ENCODE measurements at regions of chr6 and their contacts with region 1.

Region 1: GRCh38 chr6:154139892-154140291 is 100.9 kb downstream of the OPRM1 start:
- DNase-seq: peak; percentile 91 to 94 (median 92)
- H3K4me3 ChIP-seq: peak overlapping the region in 1 of 3 experiments; percentile 45
- H3K4me3 Mint-ChIP-seq: peak overlapping the region; percentile 31 to 66
- H3K27ac ChIP-seq: peak overlapping the region; percentile 67 to 95
- H3K27ac Mint-ChIP-seq: peak overlapping the region; percentile 82 to 96 (median 89)
- H3K4me1 ChIP-seq: peaks cover 26 to 29% of the 10 kb centered on the region in 2 donors
- H3K4me1 Mint-ChIP-seq: peaks cover 26% of the 10 kb centered on the region
- H3K27me3 ChIP-seq: no peaks in the 10 kb centered on the region
- H3K27me3 Mint-ChIP-seq: peaks cover 0 to 2% (median 0%) of the 10 kb centered on the region in 3 donors
- CTCF ChIP-seq: no peak

Region 2: DNA sequence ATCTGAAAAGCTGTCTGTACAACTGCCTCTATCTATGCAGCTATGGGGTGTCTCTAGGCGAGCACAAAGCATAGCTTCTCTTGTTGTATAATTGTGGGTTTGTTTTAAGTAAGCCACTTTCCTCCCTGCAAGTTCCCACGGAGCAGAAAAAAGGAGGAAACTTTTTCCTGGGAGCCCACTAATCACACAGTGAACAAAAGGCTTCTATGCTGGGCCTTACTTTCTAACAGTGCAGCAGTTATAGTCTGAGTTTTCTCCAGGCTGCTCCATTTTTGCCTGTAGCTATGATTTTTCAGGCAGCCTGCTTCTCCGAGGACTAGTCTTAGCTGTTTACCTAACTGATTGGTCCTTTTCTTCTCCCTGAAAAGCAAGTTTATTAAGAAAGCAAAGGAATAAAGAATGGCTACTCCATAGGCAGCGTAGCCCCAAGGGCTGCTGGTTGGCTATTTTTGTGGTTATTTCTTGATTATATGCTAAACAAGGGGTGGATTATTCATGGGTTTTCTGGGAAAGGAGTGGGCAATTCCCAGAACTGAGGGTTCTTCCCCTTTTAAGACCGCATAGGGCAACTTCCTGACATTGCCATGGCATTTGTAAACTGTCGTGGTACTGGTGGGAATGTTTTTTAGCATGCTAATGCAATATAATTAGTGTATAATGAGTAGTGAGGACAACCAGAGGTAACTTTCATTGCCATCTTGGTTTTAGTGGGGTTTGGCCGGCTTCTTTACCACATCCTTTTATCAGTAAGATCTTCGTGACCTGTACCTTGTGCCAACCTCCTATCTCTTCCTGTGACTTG is 16.5 kb before region 1 on chr6:
- intact Hi-C with region 1: no loop called
- DNase-seq: peak in 1 of 3 donors; percentile 52
- H3K4me3 ChIP-seq: no peak overlapping the region
- H3K4me3 Mint-ChIP-seq: no peak overlapping the region
- H3K27ac ChIP-seq: no peak overlapping the region
- H3K27ac Mint-ChIP-seq: no peak overlapping the region
- H3K4me1 ChIP-seq: peaks cover 14 to 34% of the 10 kb centered on the region in 2 donors
- H3K4me1 Mint-ChIP-seq: peaks cover 35% of the 10 kb centered on the region
- H3K27me3 ChIP-seq: no peaks in the 10 kb centered on the region
- H3K27me3 Mint-ChIP-seq: peaks cover 0 to 4% (median 0%) of the 10 kb centered on the region in 3 donors
- CTCF ChIP-seq: no peak

Region 3: GRCh38 chr6:154301839-154302752 is 162.2 kb after region 1 on chr6:
- intact Hi-C with region 1: loop called in 1 of 2 experiments (anchors 5 kb)
- DNase-seq: peak; percentile 83 to 95 (median 91)
- H3K4me3 ChIP-seq: peak overlapping the region in 1 of 3 experiments; percentile 35
- H3K4me3 Mint-ChIP-seq: peak overlapping the region; percentile 6 to 42
- H3K27ac ChIP-seq: peak overlapping the region in 1 of 2 donors; percentile 72
- H3K27ac Mint-ChIP-seq: peak overlapping the region; percentile 74 to 89 (median 81)
- H3K4me1 ChIP-seq: peaks cover 65 to 72% of the 10 kb centered on the region in 2 donors
- H3K4me1 Mint-ChIP-seq: peaks cover 77% of the 10 kb centered on the region
- H3K27me3 ChIP-seq: no peaks in the 10 kb centered on the region
- H3K27me3 Mint-ChIP-seq: no peaks in the 10 kb centered on the region
- CTCF ChIP-seq: no peak

Region 4: GRCh38 chr6:154352898-154353585 is 213.2 kb after region 1 on chr6:
- intact Hi-C with region 1: loop called in 1 of 2 experiments (anchors 10 kb)
- DNase-seq: peak; percentile 52 to 82 (median 68)
- H3K4me3 ChIP-seq: peak overlapping the region in 1 of 3 experiments; percentile 76
- H3K4me3 Mint-ChIP-seq: peak overlapping the region; percentile 50 to 73
- H3K27ac ChIP-seq: peak overlapping the region; percentile 73 to 83
- H3K27ac Mint-ChIP-seq: peak overlapping the region; percentile 80 to 98 (median 92)
- H3K4me1 ChIP-seq: peaks cover 62 to 71% of the 10 kb centered on the region in 2 donors
- H3K4me1 Mint-ChIP-seq: peaks cover 69% of the 10 kb centered on the region
- H3K27me3 ChIP-seq: no peaks in the 10 kb centered on the region
- H3K27me3 Mint-ChIP-seq: no peaks in the 10 kb centered on the region
- CTCF ChIP-seq: no peak

Region 5: DNA sequence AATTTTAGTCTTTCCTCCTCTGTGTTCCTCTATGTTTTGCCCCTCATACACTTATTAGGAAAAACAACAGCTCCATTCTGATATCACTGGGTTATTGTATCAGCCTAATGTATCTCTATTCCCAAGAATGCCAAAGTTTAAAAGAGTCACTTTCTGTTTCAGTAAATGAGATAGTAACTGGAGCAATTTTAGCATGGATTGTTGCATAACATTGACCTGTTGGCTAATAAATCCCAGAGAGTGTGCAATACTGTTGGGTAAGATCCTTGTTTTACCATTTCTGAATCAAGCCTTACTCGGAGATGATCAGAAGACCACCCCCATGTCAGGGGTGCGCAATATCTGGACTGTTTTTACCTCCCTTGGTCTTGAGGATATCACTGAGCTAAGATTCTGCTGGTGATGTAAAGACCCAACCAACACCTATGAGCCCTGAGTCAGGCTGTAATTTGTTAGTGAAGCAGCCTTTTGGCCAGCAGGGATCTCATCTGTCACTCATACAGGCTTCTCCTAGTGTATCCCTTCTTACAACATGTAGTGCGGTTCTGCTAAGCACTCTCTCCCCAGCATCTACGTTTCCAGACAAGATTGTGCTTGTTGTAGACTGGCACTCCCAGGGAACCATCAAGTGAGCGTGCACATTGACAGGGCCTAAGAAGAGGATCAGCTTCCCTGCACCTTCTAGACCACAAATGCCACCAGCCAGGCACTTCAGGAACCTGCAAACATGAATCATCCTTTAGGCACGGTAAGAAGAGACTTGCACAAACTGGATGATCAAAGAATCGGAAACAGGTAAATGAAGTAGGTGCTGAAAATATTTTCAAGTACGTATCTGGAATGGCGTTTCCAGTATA is 228.2 kb after region 1 on chr6:
- intact Hi-C with region 1: loop called in 1 of 2 experiments (anchors 5 kb)
- DNase-seq: peak in 2 of 3 donors; percentile 64 to 73
- H3K4me3 ChIP-seq: peak overlapping the region in 1 of 3 experiments; percentile 54
- H3K4me3 Mint-ChIP-seq: peak overlapping the region; percentile 56 to 84
- H3K27ac ChIP-seq: peak overlapping the region; percentile 44 to 76
- H3K27ac Mint-ChIP-seq: peak overlapping the region; percentile 88 to 95 (median 94)
- H3K4me1 ChIP-seq: peaks cover 37 to 49% of the 10 kb centered on the region in 2 donors
- H3K4me1 Mint-ChIP-seq: peaks cover 53% of the 10 kb centered on the region
- H3K27me3 ChIP-seq: no peaks in the 10 kb centered on the region
- H3K27me3 Mint-ChIP-seq: no peaks in the 10 kb centered on the region
- CTCF ChIP-seq: no peak

Region 6: DNA sequence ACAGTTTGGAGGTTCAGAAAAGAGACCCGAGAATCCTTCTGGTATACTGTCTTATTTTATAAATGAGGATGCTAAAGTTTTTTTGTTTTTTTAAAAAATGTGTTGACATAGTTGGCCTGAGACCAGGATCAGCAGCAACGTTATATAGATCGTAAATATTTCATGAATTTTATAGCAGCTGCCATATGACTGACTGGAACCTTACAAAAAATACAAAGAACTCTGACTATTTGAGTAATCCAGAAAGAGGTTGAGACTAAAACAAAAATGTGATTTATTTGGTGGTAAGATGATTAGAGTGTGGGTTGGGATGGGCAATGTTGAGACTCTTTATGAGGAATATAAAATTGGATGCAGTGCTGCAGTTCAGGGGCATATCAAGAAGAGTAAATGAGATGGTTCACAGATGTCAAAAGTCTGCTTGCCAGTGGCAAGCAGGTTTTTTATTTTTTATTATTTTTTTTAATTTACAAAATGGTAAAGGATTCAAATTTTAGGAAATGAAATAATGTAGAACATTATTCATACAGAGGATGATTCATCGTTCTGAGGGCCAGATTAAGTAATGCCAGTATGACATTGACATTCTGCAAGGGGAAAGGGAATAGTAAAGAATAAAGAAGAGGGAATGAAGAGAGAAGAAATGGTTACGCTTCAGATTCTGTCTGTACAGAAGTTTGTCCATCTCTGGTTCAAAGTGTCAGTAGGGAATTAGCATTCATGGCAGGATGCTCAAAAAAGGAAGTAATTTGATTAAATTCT is 651.8 kb after region 1 on chr6:
- intact Hi-C with region 1: loop called in 1 of 2 experiments (anchors 10 kb)
- DNase-seq: peak; percentile 34 to 67 (median 40)
- H3K4me3 ChIP-seq: no peak overlapping the region
- H3K4me3 Mint-ChIP-seq: no peak overlapping the region
- H3K27ac ChIP-seq: peak overlapping the region in 1 of 2 donors; percentile 54
- H3K27ac Mint-ChIP-seq: peak overlapping the region in 5 of 7 donors; percentile 35 to 74 (median 63)
- H3K4me1 ChIP-seq: peaks cover 5 to 7% of the 10 kb centered on the region in 2 donors
- H3K4me1 Mint-ChIP-seq: peaks cover 12% of the 10 kb centered on the region
- H3K27me3 ChIP-seq: no peaks in the 10 kb centered on the region
- H3K27me3 Mint-ChIP-seq: no peaks in the 10 kb centered on the region
- CTCF ChIP-seq: no peak